ENCODE measurements at regions of chr2 and their contacts with region 1.

Region 1: DNA sequence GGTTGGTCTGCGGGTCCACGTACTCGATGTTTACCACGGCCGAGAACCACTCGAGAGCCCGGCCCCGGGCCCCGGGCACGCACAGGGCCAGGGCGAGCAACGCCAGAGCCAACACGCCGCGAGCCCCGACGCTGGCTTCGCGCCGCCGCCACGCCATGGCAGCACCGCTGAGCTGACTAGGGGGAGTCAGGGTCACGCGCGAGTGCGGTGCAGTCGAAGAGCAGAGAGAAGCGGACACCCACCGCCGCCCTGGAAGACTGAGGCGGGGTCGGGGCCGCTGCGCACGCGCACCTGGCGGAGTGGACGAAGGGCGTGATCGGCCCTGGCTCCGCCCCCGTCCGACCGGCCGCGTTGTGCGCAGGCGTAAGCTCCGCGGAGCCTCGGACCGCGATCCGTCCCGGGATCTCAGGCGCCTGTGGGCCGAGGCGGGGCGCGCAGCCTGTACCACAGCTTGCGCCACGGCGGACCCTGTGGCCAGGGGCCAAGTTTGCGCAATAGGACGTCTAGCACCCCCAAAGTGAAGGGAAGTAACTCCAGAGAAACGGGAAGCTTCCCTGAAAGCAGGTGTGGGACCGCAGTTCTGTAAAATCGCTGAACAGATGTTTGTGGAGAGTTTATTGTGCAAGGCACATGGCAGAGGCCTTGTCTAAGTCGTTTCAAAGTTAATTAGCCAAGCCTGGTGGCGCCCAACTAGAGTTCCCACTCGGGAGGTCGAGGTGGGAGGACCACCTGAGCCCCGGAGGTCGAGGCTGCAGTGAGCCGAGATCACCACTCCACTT is at the start of gene RNF149:
- DNase-seq: peak; percentile 91
- ATAC-seq: peak; percentile 77
- H3K4me3 Mint-ChIP-seq: peak within 1 kb of the TSS; percentile 95
- H3K27ac Mint-ChIP-seq: peak within 1 kb of the TSS; percentile 98
- H3K4me1 Mint-ChIP-seq: peaks cover 58% of the 10 kb centered on the region
- H3K27me3 Mint-ChIP-seq: no peaks in the 10 kb centered on the region
- CTCF ChIP-seq: no peak
- total RNA-seq, gene RNF149: 48.7 to 53.2 TPM

Region 2: GRCh38 chr2:101272045-101272784 is 36.4 kb before region 1 on chr2:
- CTCF ChIA-PET with region 1: no interaction called
- POLR2A ChIA-PET with region 1: interaction called, 3 read pairs
- intact Hi-C with region 1: loop called (anchors 1 kb)
- DNase-seq: no peak
- ATAC-seq: peak; percentile 88
- H3K4me3 Mint-ChIP-seq: no peak overlapping the region
- H3K27ac Mint-ChIP-seq: peak overlapping the region; percentile 84
- H3K4me1 Mint-ChIP-seq: peaks cover 44% of the 10 kb centered on the region
- H3K27me3 Mint-ChIP-seq: no peaks in the 10 kb centered on the region
- CTCF ChIP-seq: no peak

Region 3: DNA sequence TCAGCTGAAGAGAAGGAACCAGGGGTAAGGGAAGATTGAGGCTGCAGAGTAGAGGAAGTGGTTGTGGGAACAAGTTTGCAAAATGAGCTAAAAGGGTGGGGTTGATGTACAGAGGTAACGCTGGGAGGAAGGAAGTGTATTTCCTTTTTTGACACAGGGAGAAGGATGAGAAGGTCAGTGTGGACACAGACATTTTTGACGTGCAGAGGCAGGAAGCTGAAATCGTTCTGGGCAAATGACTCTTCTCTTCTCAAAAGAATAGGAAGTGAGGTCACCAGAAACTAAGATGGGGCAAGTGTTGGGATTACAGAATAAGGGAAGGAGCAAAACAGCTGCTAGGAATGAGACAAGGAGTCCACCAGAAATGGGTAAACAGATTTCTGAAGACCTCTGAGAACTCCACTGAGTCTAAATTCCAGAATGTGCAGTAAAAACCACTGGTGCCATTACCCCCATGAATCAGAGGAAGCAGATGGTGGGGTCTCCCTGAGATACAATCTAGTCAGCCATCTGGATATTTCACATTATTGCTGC is 19.9 kb after region 1 on chr2:
- CTCF ChIA-PET with region 1: interaction called, 6 read pairs
- POLR2A ChIA-PET with region 1: interaction called, 14 read pairs
- intact Hi-C with region 1: no loop called
- DNase-seq: peak; percentile 46
- ATAC-seq: peak; percentile 78
- H3K4me3 Mint-ChIP-seq: no peak overlapping the region
- H3K27ac Mint-ChIP-seq: no peak overlapping the region
- H3K4me1 Mint-ChIP-seq: peaks cover 17% of the 10 kb centered on the region
- H3K27me3 Mint-ChIP-seq: no peaks in the 10 kb centered on the region
- CTCF ChIP-seq: no peak

Region 4: GRCh38 chr2:101361121-101361870 is 52.7 kb after region 1 on chr2:
- CTCF ChIA-PET with region 1: no interaction called
- POLR2A ChIA-PET with region 1: no interaction called
- intact Hi-C with region 1: no loop called
- DNase-seq: peak; percentile 40
- ATAC-seq: peak; percentile 75
- H3K4me3 Mint-ChIP-seq: no peak overlapping the region
- H3K27ac Mint-ChIP-seq: no peak overlapping the region
- H3K4me1 Mint-ChIP-seq: peaks cover 15% of the 10 kb centered on the region
- H3K27me3 Mint-ChIP-seq: no peaks in the 10 kb centered on the region
- CTCF ChIP-seq: no peak

Region 5: DNA sequence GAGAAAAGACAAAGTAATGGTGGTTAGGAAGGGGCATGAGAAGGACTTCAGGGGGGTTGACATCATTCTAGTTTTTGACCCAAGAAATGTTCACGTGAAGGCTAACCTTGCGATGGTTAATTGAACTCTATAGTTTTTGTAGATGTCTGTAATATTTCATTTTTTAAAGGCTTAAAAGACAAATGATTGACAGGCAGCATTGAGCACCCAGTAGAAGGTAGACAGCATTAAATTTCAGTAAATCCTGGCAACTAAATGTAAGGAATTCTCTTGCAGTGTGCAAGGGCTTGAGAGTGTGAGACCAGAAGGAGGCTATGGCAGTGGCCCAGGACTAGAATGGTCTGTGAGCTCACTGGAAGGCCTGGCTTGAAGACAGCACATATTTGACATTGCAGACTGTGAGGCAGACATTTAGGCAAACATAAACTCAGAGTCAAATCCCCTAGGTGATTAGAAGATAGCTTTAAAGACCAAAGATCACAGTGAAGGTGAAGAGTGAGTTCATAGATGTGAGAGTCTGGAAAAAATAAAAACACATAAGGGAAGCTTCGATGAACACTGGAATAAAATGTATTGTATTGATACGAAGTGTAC is 288.8 kb after region 1 on chr2:
- CTCF ChIA-PET with region 1: no interaction called
- POLR2A ChIA-PET with region 1: no interaction called
- intact Hi-C with region 1: no loop called
- DNase-seq: no peak
- ATAC-seq: no peak
- H3K4me3 Mint-ChIP-seq: no peak overlapping the region
- H3K27ac Mint-ChIP-seq: no peak overlapping the region
- H3K4me1 Mint-ChIP-seq: peaks cover 2% of the 10 kb centered on the region
- H3K27me3 Mint-ChIP-seq: no peaks in the 10 kb centered on the region
- CTCF ChIP-seq: no peak

Measured in activated CD8-positive, alpha-beta T cell treated with anti-CD3 and anti-CD28 coated beads for 36 hours (primary cell).